Ascending aorta (tissue), 2 donors: ENCODE measurements at regions of chr2 and their contacts with region 1.

Region 1: DNA sequence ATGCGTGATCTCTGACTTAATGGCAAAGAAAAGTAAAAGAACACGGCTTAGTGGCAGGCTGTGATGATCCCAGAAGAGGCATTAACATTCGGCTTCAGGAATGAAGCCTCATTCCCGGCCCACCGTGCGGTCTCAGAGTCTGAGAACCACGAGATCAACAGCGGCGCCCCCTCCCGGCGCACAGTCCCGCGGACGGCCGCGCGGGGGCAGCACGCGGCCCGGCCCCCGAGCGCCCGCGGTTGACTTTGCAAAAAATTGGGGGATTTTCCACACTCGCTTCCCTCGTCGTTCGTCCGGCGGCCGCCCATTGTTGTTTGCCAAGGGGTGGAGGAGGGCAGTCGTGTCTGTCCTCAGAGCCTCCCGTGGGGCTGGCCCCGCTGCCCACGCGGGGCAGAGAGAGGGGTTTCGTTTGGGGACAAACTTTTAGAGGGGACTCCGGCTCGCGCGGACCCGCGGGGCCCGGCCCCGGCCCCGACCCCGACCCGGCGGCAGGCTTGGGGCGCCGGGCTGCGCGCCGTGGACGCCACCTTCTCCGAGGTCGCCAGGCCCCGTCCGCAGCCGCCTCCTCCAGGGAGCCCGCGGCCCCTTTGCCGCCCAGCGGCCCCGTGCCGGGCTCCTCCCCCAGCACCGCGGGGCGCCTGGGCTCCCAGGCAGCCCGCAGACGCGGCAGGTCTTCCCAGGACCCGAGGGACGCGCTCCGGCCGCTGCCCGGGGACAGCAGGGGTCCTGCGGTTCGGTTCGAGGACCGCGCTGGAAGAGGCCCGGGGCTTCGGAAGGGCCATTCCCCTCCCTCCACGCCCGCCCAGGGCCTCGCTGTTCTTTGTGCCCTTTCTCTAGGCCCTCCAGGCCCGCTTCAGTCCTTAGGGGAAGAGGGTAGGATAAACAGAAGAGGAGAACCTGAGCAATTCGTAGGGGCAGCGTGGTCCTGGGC is 3.4 kb upstream of the HS6ST1 start:
- DNase-seq: peak; percentile 3 to 94
- H3K4me3 ChIP-seq: peak overlapping the region; percentile 49 to 74
- H3K27ac ChIP-seq: peak overlapping the region; percentile 68 to 77
- H3K4me1 ChIP-seq: peaks cover 13 to 19% of the 10 kb centered on the region in 2 donors
- H3K27me3 ChIP-seq: no peaks in the 10 kb centered on the region
- CTCF ChIP-seq: peak; percentile 71 to 94 (median 84)

Region 2: GRCh38 chr2:128027801-128028667 is 294.0 kb before region 1 on chr2 and contains the start of gene SAP130:
- intact Hi-C with region 1: loop called (anchors 5 kb)
- DNase-seq: peak; percentile 95 to 99
- H3K4me3 ChIP-seq: peak within 1 kb of the TSS; percentile 69 to 100
- H3K27ac ChIP-seq: peak within 1 kb of the TSS; percentile 94 to 99
- H3K4me1 ChIP-seq: peaks cover 0 to 12% of the 10 kb centered on the region in 2 donors
- H3K27me3 ChIP-seq: no peaks in the 10 kb centered on the region
- CTCF ChIP-seq: no peak
- total RNA-seq, gene SAP130: 2.8 TPM

Region 3: DNA sequence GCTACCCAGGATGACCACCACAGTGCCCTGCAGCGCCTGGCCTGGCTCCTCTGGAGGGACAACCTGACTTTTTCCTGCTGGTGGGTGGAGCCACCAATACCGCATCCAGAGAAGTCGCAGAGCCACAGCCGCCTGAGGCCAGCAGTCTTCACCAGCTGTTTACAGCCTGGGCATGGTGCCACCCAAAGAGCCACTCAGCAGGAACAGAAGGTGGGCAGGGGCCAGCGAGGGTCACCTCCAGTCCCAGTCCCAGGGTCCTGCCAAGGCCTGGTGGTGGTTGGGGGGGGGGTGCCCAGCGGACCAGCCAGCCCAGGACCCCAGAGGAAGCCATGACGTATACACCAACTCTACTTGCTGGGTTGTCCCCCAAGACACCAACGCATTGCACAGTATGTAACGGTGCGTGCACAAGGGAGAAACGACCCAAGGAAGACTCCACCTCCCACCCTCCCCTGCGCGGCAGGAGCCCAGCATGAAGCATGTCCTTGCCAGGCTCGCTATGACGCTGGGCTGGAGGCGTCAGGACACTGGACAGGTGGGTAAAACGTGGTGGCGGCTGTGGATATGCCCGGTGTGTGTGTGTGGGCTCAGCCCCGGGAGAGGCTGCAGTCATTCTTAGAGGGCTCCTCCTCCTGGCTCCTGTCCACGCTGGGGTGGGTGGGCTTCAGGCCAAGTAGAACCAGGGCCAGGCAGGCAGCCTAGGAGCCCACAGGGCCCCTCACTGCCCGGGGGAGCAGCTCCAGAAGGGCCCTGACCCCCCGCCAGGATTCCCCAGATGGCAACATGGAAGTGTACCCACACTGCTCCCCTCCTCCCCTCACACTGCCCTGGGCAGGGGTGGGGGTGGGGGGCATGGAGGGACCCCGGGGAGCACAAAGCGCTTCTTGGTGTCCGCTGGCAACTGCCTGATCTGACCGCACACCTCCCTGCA is 52.7 kb before region 1 on chr2:
- intact Hi-C with region 1: no loop called
- DNase-seq: peak in 1 of 2 donors; percentile 54
- H3K4me3 ChIP-seq: no peak overlapping the region
- H3K27ac ChIP-seq: no peak overlapping the region
- H3K4me1 ChIP-seq: no peaks in the 10 kb centered on the region
- H3K27me3 ChIP-seq: no peaks in the 10 kb centered on the region
- CTCF ChIP-seq: no peak

Region 4: GRCh38 chr2:128362846-128363228 is 40.8 kb after region 1 on chr2:
- intact Hi-C with region 1: loop called (anchors 2 kb)
- DNase-seq: peak in 1 of 2 donors; percentile 79
- H3K4me3 ChIP-seq: no peak overlapping the region
- H3K27ac ChIP-seq: peak overlapping the region; percentile 39 to 76
- H3K4me1 ChIP-seq: peaks cover 0 to 19% of the 10 kb centered on the region in 2 donors
- H3K27me3 ChIP-seq: no peaks in the 10 kb centered on the region
- CTCF ChIP-seq: no peak

Region 5: GRCh38 chr2:128469203-128469602 is 147.2 kb after region 1 on chr2:
- intact Hi-C with region 1: loop called (anchors 5 kb)
- DNase-seq: no peak
- H3K4me3 ChIP-seq: no peak overlapping the region
- H3K27ac ChIP-seq: no peak overlapping the region
- H3K4me1 ChIP-seq: peaks cover 0 to 4% of the 10 kb centered on the region in 2 donors
- H3K27me3 ChIP-seq: no peaks in the 10 kb centered on the region
- CTCF ChIP-seq: no peak

Region 6: GRCh38 chr2:128638341-128639119 is 316.5 kb after region 1 on chr2:
- intact Hi-C with region 1: loop called (anchors 10 kb)
- DNase-seq: no peak
- H3K4me3 ChIP-seq: no peak overlapping the region
- H3K27ac ChIP-seq: no peak overlapping the region
- H3K4me1 ChIP-seq: no peaks in the 10 kb centered on the region
- H3K27me3 ChIP-seq: no peaks in the 10 kb centered on the region
- CTCF ChIP-seq: no peak

Region 7: DNA sequence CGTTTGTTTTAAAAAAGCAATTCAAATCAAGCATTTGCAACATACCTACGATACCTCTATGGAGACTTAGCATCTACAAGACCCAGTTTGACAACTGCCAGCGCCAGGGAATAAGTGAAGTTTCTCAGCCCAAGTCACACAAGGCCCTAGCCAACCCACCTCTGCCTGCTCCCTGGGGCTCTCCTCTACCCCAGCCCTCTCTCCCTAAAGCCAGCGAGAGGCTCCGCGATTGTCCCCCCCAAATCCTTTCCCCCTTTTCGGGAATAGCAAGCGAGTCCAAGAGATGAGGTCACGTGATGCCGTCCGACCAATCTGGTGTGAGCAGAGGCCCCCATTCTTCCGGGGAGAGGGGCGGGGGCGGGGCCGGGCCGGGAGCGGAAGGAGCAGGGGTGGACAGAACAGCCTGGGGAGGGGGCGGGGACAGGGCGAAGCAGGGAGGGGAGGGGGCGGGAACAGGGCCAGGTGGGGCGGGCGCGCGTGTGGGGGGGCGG is 1555.3 kb after region 1 on chr2:
- intact Hi-C with region 1: loop called (anchors 5 kb)
- DNase-seq: peak; percentile 81 to 95
- H3K4me3 ChIP-seq: peak overlapping the region; percentile 82 to 86
- H3K27ac ChIP-seq: peak overlapping the region; percentile 75 to 80
- H3K4me1 ChIP-seq: peaks cover 0 to 11% of the 10 kb centered on the region in 2 donors
- H3K27me3 ChIP-seq: no peaks in the 10 kb centered on the region
- CTCF ChIP-seq: no peak